ENCODE measurements at regions of chr4 and their contacts with region 1.

Region 1: DNA sequence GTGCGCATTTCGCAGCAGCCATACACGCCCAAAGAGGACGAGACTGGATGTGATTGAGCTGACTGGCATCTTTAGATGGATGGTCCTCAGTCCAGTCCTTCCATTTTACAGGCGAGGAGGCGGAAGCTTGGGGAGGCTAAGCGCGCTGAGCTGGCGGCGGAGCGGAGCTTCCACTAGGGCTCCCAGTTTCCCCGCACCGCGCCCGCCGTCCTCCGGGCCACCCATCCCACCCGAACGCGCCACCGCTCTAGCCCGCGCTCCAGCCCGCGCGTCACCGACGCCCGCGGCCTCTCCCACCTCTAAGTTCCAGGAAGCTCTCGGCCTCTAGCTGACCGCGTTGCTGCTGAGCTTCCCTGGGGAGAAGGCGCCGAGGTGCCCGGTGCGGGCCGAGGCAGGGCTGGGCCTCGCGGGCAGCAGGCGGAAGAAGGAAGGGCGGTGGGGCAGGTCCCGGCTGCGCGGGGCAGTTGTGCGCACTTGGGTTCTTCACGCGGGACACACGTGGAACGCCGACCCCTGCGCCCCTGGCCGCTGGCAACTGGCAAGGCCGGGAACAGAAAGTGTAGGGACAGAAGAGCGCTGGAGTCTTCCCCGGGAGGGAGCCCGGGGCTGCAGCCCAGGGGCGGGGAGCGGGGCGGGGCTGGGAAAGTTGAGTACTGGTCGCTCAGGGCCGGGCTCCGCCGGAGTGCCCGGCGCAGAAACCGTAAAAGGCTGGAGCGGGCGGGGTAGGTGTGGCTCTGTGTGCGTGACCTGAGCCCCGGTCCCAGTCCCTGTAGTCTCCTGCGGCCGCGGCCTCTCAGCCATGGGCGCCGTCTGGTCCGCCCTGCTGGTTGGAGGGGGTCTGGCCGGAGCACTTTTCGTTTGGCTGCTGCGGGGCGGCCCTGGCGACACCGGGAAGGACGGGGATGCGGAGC is at the start of gene STBD1:
- DNase-seq: peak; percentile 46
- H3K4me3 Mint-ChIP-seq: peak within 1 kb of the TSS; percentile 75
- H3K27ac Mint-ChIP-seq: peak within 1 kb of the TSS; percentile 24
- H3K4me1 Mint-ChIP-seq: peaks cover 30% of the 10 kb centered on the region
- H3K27me3 Mint-ChIP-seq: peaks cover 3% of the 10 kb centered on the region
- total RNA-seq, gene STBD1: 0.63 to 0.67 TPM

Region 2: DNA sequence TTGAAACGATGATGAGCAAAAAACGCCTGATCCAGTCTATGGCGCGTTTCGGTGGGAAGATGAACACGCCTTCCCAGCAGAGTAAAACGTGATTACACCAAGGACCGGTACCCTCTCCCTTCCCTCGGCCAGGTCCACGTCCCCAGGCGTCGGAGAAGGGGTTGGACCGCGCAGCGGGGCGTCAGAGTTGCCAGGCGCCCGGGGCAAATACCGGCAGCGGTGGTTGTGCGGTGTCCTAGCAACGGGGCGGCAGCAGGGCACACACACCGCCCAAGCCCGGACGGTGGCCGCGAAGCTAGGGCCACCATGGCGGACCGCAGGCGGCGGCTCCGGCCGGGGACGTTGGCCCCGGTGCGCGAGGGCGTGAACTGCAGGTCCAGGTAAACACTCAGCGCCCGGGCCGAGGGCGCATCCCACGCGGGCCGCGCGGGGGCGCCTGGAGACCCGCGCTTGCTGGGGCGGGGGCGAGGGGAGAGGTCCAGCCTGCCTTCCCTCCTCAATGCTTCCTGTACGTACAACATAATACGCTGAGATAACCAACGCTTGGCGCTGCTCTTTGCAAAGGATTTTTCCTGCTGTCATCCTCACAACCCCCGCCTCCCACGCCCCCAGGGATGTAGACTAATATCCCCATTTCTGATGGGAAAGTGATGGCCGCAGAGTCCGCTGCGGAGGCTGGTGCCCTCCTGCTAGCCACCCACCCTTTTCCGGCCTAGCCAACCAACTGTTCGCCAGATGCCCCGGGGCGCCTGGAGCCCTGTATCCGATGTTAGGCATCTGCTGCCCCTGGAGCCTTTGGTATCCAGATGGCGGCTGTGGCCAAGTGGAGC is 54.6 kb before region 1 on chr4 and contains the start of gene FAM47E:
- CTCF ChIA-PET with region 1: no interaction called
- POLR2A ChIA-PET with region 1: no interaction called
- intact Hi-C with region 1: loop called (anchors 5 kb)
- DNase-seq: peak; percentile 55
- H3K4me3 Mint-ChIP-seq: peak within 1 kb of the TSS; percentile 69
- H3K27ac Mint-ChIP-seq: no peak within 1 kb of the TSS
- H3K4me1 Mint-ChIP-seq: peaks cover 8% of the 10 kb centered on the region
- H3K27me3 Mint-ChIP-seq: peaks cover 53% of the 10 kb centered on the region
- total RNA-seq, gene FAM47E: not detected

Region 3: DNA sequence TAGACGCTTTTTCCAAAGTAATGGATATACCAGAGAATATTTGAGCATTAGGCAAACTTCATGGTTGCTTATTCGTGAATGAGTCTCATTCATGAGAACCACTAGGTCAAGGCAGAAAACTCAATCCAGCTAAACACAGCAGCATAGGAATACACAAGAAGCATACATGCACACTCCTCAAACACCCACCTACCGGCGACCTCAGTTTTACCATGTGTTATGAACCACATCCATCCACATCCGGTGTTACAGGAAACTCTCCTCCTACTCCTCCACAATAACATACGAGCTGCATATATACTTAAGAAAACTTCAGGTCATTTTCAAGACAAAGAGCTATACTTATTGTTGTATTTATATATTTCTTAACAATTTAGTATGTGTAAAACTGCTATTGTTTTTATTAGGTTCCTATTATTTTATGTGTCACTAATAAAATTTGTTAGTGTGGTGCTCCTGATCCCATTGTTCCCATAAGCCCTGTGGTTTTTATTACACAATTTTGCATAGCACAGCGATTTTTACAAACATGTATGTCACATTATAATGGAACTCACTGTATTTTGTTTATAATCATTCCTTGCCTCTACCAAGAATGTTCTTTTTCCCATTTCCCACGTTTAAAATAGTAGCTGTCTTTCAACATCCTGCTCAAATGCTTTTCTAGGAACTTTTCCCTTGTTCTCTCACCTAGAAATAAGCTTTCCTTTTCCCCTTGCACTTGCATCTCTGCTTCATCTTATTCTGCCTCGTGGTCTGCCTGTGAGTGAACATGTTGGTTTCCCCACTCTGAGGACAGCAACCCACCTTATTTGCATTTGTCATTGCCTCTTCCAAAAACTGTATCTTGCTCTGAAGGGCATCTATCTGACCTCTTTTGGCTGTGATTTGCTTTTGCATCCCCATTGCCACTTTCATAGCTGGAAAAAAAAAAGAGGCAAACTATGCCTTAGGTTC is 48.6 kb after region 1 on chr4:
- CTCF ChIA-PET with region 1: interaction called, 4 read pairs
- POLR2A ChIA-PET with region 1: no interaction called
- intact Hi-C with region 1: loop called (anchors 2 kb)
- DNase-seq: peak; percentile 49
- H3K4me3 Mint-ChIP-seq: no peak overlapping the region
- H3K27ac Mint-ChIP-seq: no peak overlapping the region
- H3K4me1 Mint-ChIP-seq: peaks cover 10% of the 10 kb centered on the region
- H3K27me3 Mint-ChIP-seq: no peaks in the 10 kb centered on the region

Region 4: GRCh38 chr4:76377911-76378310 is 71.7 kb after region 1 on chr4:
- CTCF ChIA-PET with region 1: interaction called, 23 read pairs
- POLR2A ChIA-PET with region 1: no interaction called
- intact Hi-C with region 1: loop called (anchors 5 kb)
- DNase-seq: peak; percentile 64
- H3K4me3 Mint-ChIP-seq: no peak overlapping the region
- H3K27ac Mint-ChIP-seq: no peak overlapping the region
- H3K4me1 Mint-ChIP-seq: no peaks in the 10 kb centered on the region
- H3K27me3 Mint-ChIP-seq: no peaks in the 10 kb centered on the region

Region 5: DNA sequence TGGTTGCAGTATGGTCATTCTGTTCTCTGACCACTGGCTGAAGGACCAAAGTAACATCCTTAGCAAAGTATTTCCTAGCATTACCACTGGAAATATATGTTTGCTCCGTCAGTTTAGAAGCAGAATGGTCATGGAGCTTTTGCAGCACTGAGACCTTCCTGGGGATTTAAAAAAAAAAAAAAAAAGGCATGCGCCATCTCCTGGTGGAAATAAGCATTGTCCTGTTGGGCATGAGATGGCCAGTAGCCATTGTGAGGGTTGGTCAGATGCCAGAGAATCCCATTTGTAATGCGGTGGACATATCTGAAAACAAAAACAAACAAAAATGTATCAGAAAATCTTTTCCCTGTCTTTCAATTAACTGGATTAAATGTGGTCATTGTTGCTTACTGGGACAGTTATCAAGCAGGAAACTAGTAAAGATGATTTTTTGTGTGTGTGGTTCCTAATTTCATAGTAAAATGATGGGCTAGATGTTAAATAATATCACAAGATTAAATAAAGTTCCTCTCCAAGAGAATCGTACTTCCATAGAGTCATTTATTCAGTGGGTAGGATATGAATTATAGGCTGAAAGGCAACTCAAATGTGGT is 452.2 kb after region 1 on chr4:
- CTCF ChIA-PET with region 1: no interaction called
- POLR2A ChIA-PET with region 1: no interaction called
- intact Hi-C with region 1: loop called (anchors 10 kb)
- DNase-seq: no peak
- H3K4me3 Mint-ChIP-seq: no peak overlapping the region
- H3K27ac Mint-ChIP-seq: no peak overlapping the region
- H3K4me1 Mint-ChIP-seq: peaks cover 11% of the 10 kb centered on the region
- H3K27me3 Mint-ChIP-seq: peaks cover 7% of the 10 kb centered on the region

Measured in activated CD4-positive, alpha-beta memory T cell treated with anti-CD3 and anti-CD28 coated beads for 36 hours (primary cell).